ENCODE measurements at regions of chr9 and their contacts with region 1.

Region 1: GRCh38 chr9:35705836-35706430 is 16.2 kb upstream of the TPM2 start:
- DNase-seq: peak; percentile 49

Region 2: DNA sequence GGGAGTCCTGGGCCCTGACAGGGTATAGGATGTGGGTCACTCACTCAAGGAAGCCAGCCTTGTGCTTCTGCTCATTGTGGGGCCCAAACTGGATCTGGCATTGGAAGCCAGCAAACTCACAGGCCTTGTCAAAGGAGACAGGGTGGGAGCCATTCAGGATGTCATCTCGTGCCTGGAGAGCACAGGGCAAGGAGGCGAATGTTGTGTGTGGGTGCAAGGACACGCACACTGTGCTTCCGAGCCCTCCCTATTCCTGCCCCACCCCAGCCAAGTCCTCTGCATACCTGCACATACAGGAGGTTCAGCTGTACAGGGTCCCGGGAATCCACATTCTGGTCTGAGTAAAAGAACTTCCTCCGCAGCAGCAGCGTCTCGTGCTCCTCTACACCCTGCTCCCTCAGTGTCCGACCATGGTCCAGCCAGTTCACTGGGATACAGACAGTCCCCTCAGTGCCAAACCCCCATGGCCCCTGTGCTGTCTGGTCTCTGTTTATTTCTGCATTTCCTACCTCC is 18.0 kb after region 1 on chr9:
- intact Hi-C with region 1: loop called in 1 of 2 experiments (anchors 2 kb)
- DNase-seq: no peak

Region 3: DNA sequence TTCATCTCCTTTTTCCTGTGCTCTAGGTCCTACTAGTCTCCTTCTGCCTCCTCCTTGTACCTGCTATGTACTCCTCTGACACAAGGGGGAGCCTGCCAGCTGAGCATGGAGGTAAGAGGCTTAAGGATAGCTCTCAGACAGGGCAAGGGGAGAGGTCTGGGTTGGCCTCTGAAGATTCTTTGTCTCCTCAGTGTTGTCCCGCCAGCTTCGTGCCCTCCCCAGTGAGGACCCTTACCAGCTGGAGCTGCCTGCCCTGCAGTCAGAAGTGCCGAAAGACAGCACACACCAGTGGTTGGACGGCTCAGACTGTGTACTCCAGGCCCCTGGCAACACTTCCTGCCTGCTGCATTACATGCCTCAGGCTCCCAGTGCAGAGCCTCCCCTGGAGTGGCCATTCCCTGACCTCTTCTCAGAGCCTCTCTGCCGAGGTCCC is 30.3 kb after region 1 on chr9:
- intact Hi-C with region 1: no loop called
- DNase-seq: no peak

Measured in posterior vena cava (tissue), 2 donors.